ENCODE measurements at regions of chr5 and their contacts with region 1.

Region 1: GRCh38 chr5:79575996-79576395 is 36.2 kb upstream of the TENT2 start:
- DNase-seq: no peak
- H3K4me3 Mint-ChIP-seq: no peak overlapping the region
- H3K27ac Mint-ChIP-seq: no peak overlapping the region
- H3K4me1 Mint-ChIP-seq: peaks cover 3% of the 10 kb centered on the region
- H3K27me3 Mint-ChIP-seq: no peaks in the 10 kb centered on the region
- CTCF ChIP-seq: no peak

Region 2: GRCh38 chr5:79590396-79590999 is 14.5 kb after region 1 on chr5:
- CTCF ChIA-PET with region 1: interaction called, 10 read pairs
- intact Hi-C with region 1: no loop called
- DNase-seq: no peak
- H3K4me3 Mint-ChIP-seq: no peak overlapping the region
- H3K27ac Mint-ChIP-seq: no peak overlapping the region
- H3K4me1 Mint-ChIP-seq: no peaks in the 10 kb centered on the region
- H3K27me3 Mint-ChIP-seq: no peaks in the 10 kb centered on the region
- CTCF ChIP-seq: no peak

Measured in Calu3 (cell line).